Transverse colon (tissue), 4 donors: ENCODE measurements at regions of chr3 and their contacts with region 1.

Region 1: GRCh38 chr3:17500618-17501017 is 241.8 kb downstream of the TBC1D5 start:
- DNase-seq: no peak
- H3K4me3 ChIP-seq: no peak overlapping the region
- H3K27ac ChIP-seq: no peak overlapping the region
- H3K4me1 ChIP-seq: no peaks in the 10 kb centered on the region
- H3K27me3 ChIP-seq: no peaks in the 10 kb centered on the region
- CTCF ChIP-seq: no peak
- EP300 ChIP-seq: no peak
- POLR2A ChIP-seq: no peak

Region 2: GRCh38 chr3:16419640-16420241 is 1080.9 kb before region 1 on chr3:
- in situ Hi-C with region 1: no loop called
- intact Hi-C with region 1: loop called (anchors 5 kb)
- DNase-seq: no peak
- H3K4me3 ChIP-seq: no peak overlapping the region
- H3K27ac ChIP-seq: peak overlapping the region in 1 of 4 donors; percentile 51
- H3K4me1 ChIP-seq: peaks cover 0 to 9% (median 0%) of the 10 kb centered on the region in 4 donors
- H3K27me3 ChIP-seq: no peaks in the 10 kb centered on the region
- CTCF ChIP-seq: no peak
- EP300 ChIP-seq: no peak
- POLR2A ChIP-seq: no peak